Colonic mucosa (tissue), 4 donors: ENCODE measurements at regions of chr10 and their contacts with region 1.

Region 1: DNA sequence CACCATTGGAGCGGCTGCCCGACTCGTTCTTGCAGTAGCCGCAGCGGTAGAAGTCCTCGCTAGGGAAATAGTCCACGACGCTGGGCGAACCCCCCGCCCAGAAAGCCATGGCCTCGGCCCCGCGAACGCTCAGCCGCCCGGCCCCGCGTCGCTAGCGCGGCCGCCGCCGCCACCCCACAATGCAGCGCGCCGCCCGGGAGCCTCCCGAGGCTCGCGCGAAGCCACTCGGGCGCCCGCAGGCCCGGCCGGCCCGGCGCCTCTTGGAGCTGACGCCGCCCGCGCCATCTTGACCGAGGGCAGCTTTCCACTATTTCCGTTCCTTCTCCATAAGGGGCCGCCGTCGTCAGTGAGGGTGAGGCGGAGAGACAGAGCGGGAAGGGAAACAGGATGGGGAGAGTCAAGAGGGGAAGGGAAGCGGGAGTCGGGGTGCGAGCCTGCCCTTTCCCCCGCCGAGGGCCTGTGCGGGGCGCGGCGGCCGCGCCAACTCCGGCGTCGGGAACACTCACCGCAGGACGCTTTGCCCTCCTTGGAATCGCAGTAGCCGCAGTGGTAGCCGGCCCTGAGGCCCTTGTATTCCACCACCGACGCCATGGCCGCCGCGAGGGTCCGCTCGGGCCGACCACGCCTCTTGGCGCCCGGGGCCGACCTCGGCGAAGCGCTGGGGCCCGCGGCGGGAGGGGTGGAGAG is at the start of gene ATE1:
- DNase-seq: peak; percentile 90
- H3K4me3 ChIP-seq: peak within 1 kb of the TSS; percentile 99
- H3K27ac ChIP-seq: peak within 1 kb of the TSS; percentile 98
- H3K4me1 ChIP-seq: no peaks in the 10 kb centered on the region
- H3K27me3 ChIP-seq: no peaks in the 10 kb centered on the region
- CTCF ChIP-seq: no peak
- total RNA-seq, gene ATE1: 32.9 to 78.0 TPM

Region 2: GRCh38 chr10:121974535-121975294 is 46.7 kb after region 1 on chr10 and contains the start of gene NSMCE4A:
- intact Hi-C with region 1: loop called (anchors 10 kb)
- DNase-seq: peak; percentile 77
- H3K4me3 ChIP-seq: peak within 1 kb of the TSS; percentile 72
- H3K27ac ChIP-seq: peak within 1 kb of the TSS; percentile 96
- H3K4me1 ChIP-seq: no peaks in the 10 kb centered on the region
- H3K27me3 ChIP-seq: no peaks in the 10 kb centered on the region
- CTCF ChIP-seq: peak; percentile 69
- total RNA-seq, gene NSMCE4A: 55.0 to 63.9 TPM

Region 3: DNA sequence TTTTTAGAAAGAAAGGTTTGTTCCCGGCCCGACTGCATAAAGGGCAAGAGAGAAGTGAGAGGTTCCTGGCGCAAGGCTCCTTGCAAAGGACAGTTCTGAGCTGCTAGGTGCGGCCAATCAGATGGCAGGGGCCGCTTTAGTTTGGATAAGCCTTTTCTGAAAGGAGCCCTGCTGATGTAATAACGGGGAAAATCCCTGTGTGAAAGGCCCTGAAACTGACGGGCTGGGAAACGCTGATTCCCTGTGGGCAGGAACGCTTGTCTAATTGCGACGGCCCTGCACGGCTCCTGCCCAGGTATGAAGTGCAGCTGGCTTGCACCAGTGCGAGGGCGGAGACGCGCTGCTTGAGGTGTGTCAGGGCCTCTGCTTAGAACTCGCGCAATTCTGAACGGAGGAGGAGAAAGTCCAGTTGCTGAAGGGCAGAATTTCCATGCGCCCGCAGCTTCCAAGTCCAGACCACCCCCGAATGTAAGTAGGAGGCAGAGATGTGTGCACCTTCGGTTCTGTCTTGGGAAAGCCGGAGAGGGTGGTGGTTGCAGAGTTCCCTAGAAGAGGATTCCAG is 91.5 kb after region 1 on chr10:
- intact Hi-C with region 1: no loop called
- DNase-seq: peak; percentile 91
- H3K4me3 ChIP-seq: peak overlapping the region; percentile 32
- H3K27ac ChIP-seq: peak overlapping the region; percentile 90
- H3K4me1 ChIP-seq: no peaks in the 10 kb centered on the region
- H3K27me3 ChIP-seq: no peaks in the 10 kb centered on the region
- CTCF ChIP-seq: no peak

Region 4: DNA sequence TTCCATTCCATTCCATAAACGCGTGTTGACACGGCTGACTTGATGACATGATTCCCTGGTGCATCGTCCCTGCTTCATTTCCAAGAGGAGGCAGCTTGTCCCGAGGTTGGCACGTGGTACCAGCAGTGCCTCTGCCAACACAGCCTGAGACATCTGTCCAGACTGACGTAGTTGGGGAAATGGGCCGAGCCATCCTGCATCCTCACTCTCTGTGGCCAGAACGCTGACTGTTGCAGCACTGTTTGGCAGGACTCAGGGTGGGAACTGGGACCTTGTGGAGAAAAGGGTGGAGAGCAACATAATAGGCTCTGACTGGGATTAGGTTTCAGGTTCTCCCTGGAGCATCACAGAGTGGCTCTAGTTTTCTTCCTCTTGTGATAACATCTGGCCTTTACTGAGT is 224.6 kb after region 1 on chr10:
- intact Hi-C with region 1: no loop called
- DNase-seq: no peak
- H3K4me3 ChIP-seq: no peak overlapping the region
- H3K27ac ChIP-seq: no peak overlapping the region
- H3K4me1 ChIP-seq: no peaks in the 10 kb centered on the region
- H3K27me3 ChIP-seq: no peaks in the 10 kb centered on the region
- CTCF ChIP-seq: no peak